Heart right ventricle (tissue), 16 donors: ENCODE measurements at regions of chr9 and their contacts with region 1.

Region 1: DNA sequence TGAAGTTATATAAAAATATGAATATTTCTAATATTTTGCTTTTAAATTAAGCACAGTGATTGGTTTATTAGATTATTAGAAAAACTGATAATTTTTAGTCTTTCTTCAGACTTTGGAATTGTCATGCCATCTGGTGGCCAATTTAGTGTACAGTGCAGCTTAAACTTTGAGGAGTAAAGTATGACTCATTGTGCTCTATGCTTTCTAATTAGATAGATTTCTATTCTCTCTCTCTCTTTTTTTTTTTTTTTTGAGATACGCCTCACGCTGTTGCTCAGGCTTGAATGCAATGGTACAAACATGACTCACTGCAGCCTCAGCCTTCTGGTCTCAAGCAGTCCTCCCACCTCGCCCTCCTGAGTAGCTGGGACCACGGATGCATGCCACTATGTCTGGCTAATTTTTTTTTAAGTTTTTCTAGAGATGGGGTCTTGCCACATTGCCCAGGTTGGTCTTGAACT is 42.1 kb upstream of the GPR21 start:
- DNase-seq: peak in 1 of 2 donors; percentile 28
- ATAC-seq: peak in 7 of 8 donors; percentile 44 to 85 (median 61)
- H3K4me3 ChIP-seq: no peak overlapping the region
- H3K27ac ChIP-seq: no peak overlapping the region
- H3K4me1 ChIP-seq: peaks cover 0 to 8% (median 0%) of the 10 kb centered on the region in 9 donors
- H3K27me3 ChIP-seq: no peaks in the 10 kb centered on the region
- CTCF ChIP-seq: peak; percentile 47 to 84 (median 73)

Region 2: DNA sequence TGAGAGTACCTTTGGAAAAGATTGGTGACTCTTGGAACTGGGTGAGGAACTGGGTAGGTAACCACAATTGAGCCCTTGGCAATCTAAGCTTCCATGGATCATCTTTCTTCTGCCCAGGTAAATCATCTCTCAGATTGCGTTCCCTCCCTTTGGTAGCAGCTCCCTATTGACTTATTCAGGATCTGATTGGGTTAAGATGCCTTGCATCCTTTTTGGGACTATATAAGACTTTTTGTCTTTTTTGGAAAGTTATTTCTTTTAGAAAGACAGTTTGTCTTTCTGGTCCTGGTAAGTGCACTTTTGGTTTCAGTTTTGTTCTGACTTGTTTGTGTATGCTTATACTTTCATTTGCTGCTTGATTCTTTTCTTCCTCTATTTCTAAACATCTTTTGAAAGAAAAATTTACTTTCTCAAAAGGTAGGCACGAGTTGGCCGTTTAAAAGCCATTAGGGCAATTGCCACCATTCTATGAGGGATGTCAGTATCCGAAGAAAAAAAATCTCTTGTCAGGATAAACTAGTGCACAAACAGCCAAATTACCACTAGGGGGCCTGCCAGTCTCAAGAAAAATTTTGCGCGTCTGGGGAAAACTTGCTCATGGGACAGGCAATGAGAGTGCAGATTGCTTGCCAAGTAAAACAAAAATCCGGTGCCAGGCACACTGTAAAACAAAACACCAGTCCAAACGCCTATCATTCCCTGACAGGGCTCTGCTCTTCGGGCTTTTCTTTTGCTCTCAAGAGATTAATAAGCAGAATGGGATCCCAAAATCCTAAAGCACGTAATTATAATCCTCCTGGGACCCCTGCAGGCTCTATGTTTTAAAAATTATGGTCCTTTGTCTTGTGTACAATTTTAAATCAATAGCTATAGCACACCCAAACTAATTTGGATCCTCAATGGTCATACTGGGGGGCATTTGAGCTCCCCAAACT is 526.5 kb before region 1 on chr9:
- intact Hi-C with region 1: loop called in 1 of 10 experiments (anchors 5 kb)
- DNase-seq: peak; percentile 29 to 83
- ATAC-seq: peak; percentile 51 to 93 (median 80)
- H3K4me3 ChIP-seq: peak overlapping the region in 9 of 10 donors; percentile 20 to 51 (median 41)
- H3K27ac ChIP-seq: peak overlapping the region in 2 of 10 donors; percentile 5 to 73
- H3K4me1 ChIP-seq: peaks cover 0 to 12% (median 8%) of the 10 kb centered on the region in 9 donors
- H3K27me3 ChIP-seq: peaks cover 0 to 31% (median 6%) of the 10 kb centered on the region in 7 donors
- CTCF ChIP-seq: peak; percentile 73 to 87 (median 80)

Region 3: GRCh38 chr9:122904823-122905710 is 86.3 kb before region 1 on chr9 and contains the start of gene RC3H2:
- intact Hi-C with region 1: loop called in 5 of 10 experiments (anchors 5 to 10 kb)
- DNase-seq: peak; percentile 93 to 99
- ATAC-seq: peak; percentile 97 to 99 (median 99)
- H3K4me3 ChIP-seq: peak within 1 kb of the TSS; percentile 73 to 99 (median 86)
- H3K27ac ChIP-seq: peak within 1 kb of the TSS; percentile 89 to 98 (median 94)
- H3K4me1 ChIP-seq: peaks cover 5 to 49% (median 40%) of the 10 kb centered on the region in 9 donors
- H3K27me3 ChIP-seq: no peaks in the 10 kb centered on the region
- CTCF ChIP-seq: no peak
- total RNA-seq, gene RC3H2: 35.6 to 52.2 (median 43.5) TPM

Region 4: GRCh38 chr9:122912964-122913673 is 78.3 kb before region 1 on chr9 and contains the start of gene ZBTB6:
- intact Hi-C with region 1: loop called in 3 of 10 experiments (anchors 5 to 10 kb)
- DNase-seq: peak; percentile 52 to 80
- ATAC-seq: peak; percentile 95 to 100 (median 99)
- H3K4me3 ChIP-seq: peak within 1 kb of the TSS; percentile 45 to 91 (median 84)
- H3K27ac ChIP-seq: peak within 1 kb of the TSS; percentile 57 to 92 (median 84)
- H3K4me1 ChIP-seq: peaks cover 4 to 24% (median 18%) of the 10 kb centered on the region in 9 donors
- H3K27me3 ChIP-seq: no peaks in the 10 kb centered on the region
- CTCF ChIP-seq: no peak
- total RNA-seq, gene ZBTB6: 4.3 to 7.0 (median 6.0) TPM

Region 5: GRCh38 chr9:122930541-122931225 is 60.7 kb before region 1 on chr9:
- intact Hi-C with region 1: no loop called
- DNase-seq: no peak
- ATAC-seq: no peak
- H3K4me3 ChIP-seq: peak overlapping the region; percentile 62 to 94 (median 84)
- H3K27ac ChIP-seq: peak overlapping the region; percentile 36 to 96 (median 90)
- H3K4me1 ChIP-seq: peaks cover 3 to 41% (median 32%) of the 10 kb centered on the region in 9 donors
- H3K27me3 ChIP-seq: no peaks in the 10 kb centered on the region
- CTCF ChIP-seq: no peak

Region 6: GRCh38 chr9:122940603-122941559 is 50.5 kb before region 1 on chr9 and contains the start of gene RABGAP1:
- intact Hi-C with region 1: loop called in 1 of 10 experiments (anchors 5 kb)
- DNase-seq: peak; percentile 99 to 100
- ATAC-seq: peak; percentile 97 to 99 (median 99)
- H3K4me3 ChIP-seq: peak within 1 kb of the TSS; percentile 77 to 96 (median 88)
- H3K27ac ChIP-seq: peak within 1 kb of the TSS; percentile 76 to 94 (median 88)
- H3K4me1 ChIP-seq: peaks cover 3 to 51% (median 36%) of the 10 kb centered on the region in 9 donors
- H3K27me3 ChIP-seq: no peaks in the 10 kb centered on the region
- CTCF ChIP-seq: no peak
- total RNA-seq, gene RABGAP1: 36.9 to 62.3 (median 48.7) TPM